ENCODE measurements at regions of chr16 and their contacts with region 1.

Region 1: DNA sequence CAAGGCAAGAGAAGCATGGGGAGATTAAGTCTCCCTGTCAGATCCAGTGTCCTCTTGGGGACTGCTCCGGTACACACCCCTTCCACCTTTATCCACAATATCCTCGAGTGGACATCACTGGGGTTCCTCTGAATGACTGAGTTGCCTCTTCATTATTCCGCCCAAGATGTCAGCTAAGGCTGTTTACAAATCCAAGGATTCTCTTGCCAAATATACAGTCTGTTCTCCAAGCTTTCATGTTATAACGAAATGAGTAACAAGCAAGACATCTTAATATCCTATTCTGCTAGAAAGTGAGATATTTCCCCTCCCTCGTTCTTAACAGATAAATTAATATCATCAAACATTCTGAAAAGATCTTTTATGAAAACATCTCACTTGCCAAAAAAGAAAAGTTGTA is 314.1 kb upstream of the IRX5 start:
- DNase-seq: no peak
- H3K4me3 ChIP-seq: no peak overlapping the region
- H3K27ac ChIP-seq: no peak overlapping the region
- H3K4me1 ChIP-seq: no peaks in the 10 kb centered on the region
- H3K27me3 ChIP-seq: peaks cover 0 to 3% of the 10 kb centered on the region in 2 donors
- CTCF ChIP-seq: no peak

Region 2: GRCh38 chr16:54546521-54546920 is 70.1 kb before region 1 on chr16:
- intact Hi-C with region 1: no loop called
- DNase-seq: no peak
- H3K4me3 ChIP-seq: no peak overlapping the region
- H3K27ac ChIP-seq: no peak overlapping the region
- H3K4me1 ChIP-seq: peaks cover 0 to 9% (median 0%) of the 10 kb centered on the region in 4 donors
- H3K27me3 ChIP-seq: no peaks in the 10 kb centered on the region
- CTCF ChIP-seq: no peak

Region 3: DNA sequence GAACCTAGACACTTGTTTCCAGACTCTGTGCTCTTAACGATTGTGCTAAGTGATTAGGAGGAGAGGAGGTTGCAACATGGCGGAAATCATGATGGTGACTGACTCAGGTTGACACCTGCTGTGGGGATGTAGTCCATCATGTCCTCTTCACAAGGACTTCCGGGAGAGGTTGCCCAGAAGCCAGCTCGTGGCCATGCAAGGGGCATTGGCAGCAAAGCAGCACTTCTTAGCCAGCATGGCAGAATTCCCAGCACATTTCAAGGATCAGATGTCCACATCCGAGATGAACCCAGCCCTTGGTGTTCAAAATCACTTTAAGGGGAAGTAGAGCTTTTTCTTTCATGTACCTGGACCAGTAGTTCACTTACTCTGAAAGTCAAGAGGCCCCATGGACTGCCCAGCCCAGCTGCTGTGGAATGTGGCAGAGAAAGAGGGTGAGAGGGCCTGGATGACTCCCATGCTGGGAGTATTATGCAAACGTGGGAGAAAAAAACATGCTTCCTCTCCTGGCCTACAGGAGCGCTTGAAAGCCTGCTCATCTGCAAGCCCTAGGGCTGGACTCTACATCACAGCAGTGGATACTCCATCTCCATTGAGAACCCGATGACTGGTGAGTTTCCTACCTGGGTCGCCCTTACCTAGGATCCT is 772.9 kb after region 1 on chr16:
- intact Hi-C with region 1: loop called (anchors 10 kb)
- DNase-seq: no peak
- H3K4me3 ChIP-seq: no peak overlapping the region
- H3K27ac ChIP-seq: no peak overlapping the region
- H3K4me1 ChIP-seq: peaks cover 0 to 9% (median 5%) of the 10 kb centered on the region in 4 donors
- H3K27me3 ChIP-seq: no peaks in the 10 kb centered on the region
- CTCF ChIP-seq: no peak